Activated CD4-positive, alpha-beta T cell treated with anti-CD3 and anti-CD28 coated beads for 36 hours (primary cell): ENCODE measurements at regions of chr12 and their contacts with region 1.

Region 1: DNA sequence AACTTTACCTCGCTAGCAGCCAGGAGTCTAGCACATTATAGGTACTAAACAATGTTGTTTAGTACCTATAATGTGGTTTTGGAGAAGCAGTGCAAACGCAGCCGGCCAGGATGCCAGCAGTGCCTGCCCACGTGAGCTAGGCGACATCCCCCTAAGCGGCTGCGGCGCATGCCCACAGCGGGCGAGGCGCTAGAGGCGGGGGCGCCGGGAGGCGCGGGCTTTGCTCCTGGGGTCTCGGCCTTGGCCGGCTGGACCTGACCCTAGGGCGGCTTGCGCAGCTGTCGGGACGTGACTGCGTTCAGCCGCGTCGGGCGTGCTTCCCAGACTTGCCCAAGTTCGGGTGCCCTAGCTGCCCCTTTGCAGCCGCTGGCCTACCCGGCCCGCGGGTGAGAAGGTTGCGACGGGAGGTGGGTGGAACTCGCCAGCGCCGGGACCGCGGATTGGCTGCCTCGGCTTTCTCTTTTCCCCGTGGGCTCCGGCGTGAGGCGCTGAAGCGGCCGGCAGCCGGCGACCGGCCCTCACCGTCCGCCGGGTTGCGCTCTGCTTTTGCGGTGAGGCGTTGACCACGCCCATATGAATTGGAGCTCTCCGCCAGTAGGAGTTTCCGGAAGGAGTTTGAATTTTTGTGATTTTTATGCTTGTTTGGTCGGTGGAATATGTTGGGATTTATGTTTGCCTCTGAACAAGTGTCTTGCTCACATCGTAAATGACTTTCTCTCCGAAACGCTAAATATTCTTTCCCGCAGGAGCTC is at the start of gene TMEM19:
- DNase-seq: peak; percentile 87
- ATAC-seq: peak; percentile 88
- H3K4me3 Mint-ChIP-seq: peak within 1 kb of the TSS; percentile 87
- H3K27ac Mint-ChIP-seq: peak within 1 kb of the TSS; percentile 91
- H3K4me1 Mint-ChIP-seq: peaks cover 17% of the 10 kb centered on the region
- H3K27me3 Mint-ChIP-seq: no peaks in the 10 kb centered on the region
- total RNA-seq, gene TMEM19: 6.1 to 12.9 TPM

Region 2: DNA sequence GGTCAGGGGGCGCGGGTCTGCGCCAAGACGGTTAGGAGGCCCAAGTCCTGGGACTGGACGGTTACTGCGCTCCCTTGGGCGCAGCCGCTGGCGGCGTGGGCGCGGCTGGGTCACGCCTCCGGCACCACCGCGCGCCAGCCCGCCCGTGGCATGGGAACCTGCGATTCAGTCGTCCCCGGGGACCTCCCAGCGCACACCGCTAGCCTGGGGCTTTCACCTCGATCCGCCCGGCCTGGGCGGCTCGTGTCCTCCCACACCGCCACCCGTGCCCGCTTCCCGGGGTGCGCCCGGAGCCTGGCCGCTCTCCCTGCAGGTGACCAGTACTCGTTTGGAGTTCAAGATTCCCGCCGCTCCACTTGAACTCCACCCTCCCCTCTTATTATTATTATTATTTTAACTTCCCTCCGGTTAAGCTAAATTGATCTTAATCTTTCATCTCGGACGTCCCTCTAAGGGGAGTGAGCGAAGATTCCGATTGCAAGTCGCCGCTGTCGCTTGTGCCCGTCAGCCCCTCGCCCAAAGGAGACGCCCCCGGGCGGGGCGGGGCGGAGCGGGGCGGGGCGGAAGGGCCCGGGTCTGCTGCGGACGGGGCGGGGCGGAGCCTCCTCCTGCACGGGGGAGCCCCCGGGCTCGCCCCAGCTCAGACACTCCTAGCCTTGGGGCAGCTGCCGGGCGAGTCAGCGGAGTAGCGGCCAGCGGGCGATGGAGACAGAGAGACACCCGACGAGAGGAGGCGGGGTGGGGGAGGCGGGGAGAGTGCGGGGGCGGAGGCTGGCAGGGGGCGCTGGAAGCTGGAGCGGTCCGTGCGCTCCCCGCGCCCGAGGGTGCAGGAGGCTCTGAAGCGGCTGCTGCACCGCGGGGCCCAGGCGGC is 1320.2 kb before region 1 on chr12 and contains the start of gene KCNMB4:
- CTCF ChIA-PET with region 1: no interaction called
- POLR2A ChIA-PET with region 1: no interaction called
- intact Hi-C with region 1: loop called in 1 of 2 experiments (anchors 5 kb)
- DNase-seq: peak; percentile 88
- ATAC-seq: peak; percentile 91
- H3K4me3 Mint-ChIP-seq: peak within 1 kb of the TSS; percentile 86
- H3K27ac Mint-ChIP-seq: peak within 1 kb of the TSS; percentile 34
- H3K4me1 Mint-ChIP-seq: peaks cover 17% of the 10 kb centered on the region
- H3K27me3 Mint-ChIP-seq: peaks cover 6% of the 10 kb centered on the region
- total RNA-seq, gene KCNMB4: 0.94 to 2.1 TPM

Region 3: DNA sequence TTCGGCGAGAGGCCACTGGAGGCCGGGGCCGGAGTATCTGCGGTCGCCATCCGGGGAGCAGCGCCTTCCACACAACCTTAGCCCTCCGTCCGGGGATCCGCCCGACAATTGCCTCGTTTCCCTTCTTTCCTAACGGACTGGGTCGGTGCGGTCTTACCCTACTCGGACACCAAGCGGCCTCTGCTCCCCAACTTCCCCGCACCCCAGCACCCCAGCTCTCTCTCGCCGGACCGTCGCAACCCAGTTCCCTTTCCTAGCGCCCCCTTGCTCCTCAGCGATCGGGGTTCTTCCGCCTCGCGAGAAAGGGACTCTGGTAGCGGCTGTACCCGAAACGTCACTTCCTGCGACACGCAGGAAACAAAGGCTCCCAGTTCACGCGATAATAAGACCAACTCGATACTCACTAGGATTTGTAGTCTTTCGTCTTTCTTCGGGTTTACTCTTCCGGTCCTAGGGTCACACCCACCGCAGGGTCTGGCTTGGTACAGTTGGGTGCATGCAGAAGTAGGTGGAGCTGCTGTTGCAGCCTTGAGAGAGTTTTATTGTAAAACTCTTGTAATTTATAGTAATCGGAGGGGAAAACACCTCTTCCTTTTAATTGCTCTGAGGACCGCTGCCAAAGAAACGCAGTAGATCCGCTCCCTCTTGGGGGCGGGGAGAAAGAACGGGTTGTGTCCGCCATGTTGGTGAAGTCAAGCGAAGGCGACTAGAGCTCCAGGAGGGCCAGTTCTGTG is 22.4 kb before region 1 on chr12 and contains the start of gene ZFC3H1:
- CTCF ChIA-PET with region 1: interaction called, 44 read pairs
- POLR2A ChIA-PET with region 1: interaction called, 55 read pairs
- intact Hi-C with region 1: loop called (anchors 1 kb)
- DNase-seq: peak; percentile 93
- ATAC-seq: peak; percentile 87
- H3K4me3 Mint-ChIP-seq: peak within 1 kb of the TSS; percentile 98
- H3K27ac Mint-ChIP-seq: peak within 1 kb of the TSS; percentile 99
- H3K4me1 Mint-ChIP-seq: peaks cover 38% of the 10 kb centered on the region
- H3K27me3 Mint-ChIP-seq: no peaks in the 10 kb centered on the region
- total RNA-seq, gene ZFC3H1: 57.1 to 71.5 TPM

Region 4: GRCh38 chr12:71746983-71747611 is 61.0 kb after region 1 on chr12:
- CTCF ChIA-PET with region 1: interaction called, 16 read pairs
- POLR2A ChIA-PET with region 1: no interaction called
- intact Hi-C with region 1: no loop called
- DNase-seq: peak; percentile 62
- ATAC-seq: peak; percentile 79
- H3K4me3 Mint-ChIP-seq: no peak overlapping the region
- H3K27ac Mint-ChIP-seq: no peak overlapping the region
- H3K4me1 Mint-ChIP-seq: no peaks in the 10 kb centered on the region
- H3K27me3 Mint-ChIP-seq: peaks cover 10% of the 10 kb centered on the region

Region 5: DNA sequence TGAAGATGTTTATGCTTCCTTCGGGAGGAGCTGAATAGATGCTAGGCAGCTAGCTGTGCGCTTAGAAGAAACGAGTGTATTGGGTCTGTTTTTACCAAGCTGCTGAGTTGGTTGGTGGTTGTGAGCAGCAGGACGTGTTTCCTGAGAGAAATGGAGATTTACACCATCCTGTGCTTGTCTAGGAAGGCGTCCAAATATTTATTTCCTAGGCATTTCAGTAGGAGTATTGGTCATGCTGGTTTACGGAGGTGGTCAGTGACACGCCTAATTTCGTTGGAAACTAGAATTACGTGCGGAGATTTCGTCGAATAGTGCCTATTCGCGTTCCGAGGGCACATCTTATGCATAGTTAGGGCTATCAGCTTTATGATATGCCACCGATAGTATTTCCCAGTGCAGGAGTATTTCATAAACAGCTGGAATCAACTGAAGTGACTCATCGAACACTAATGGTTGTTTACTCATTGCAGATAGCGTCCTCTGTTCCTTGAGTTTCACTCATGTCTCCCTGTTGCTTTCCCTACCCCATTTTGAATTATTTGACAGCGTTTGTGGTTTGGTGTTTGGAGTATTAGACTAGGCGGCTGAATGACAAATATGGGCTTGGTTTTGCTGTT is 154.2 kb after region 1 on chr12:
- CTCF ChIA-PET with region 1: no interaction called
- POLR2A ChIA-PET with region 1: no interaction called
- intact Hi-C with region 1: loop called in 1 of 2 experiments (anchors 1 kb)
- DNase-seq: peak; percentile 16
- ATAC-seq: peak; percentile 28
- H3K4me3 Mint-ChIP-seq: peak overlapping the region; percentile 94
- H3K27ac Mint-ChIP-seq: peak overlapping the region; percentile 95
- H3K4me1 Mint-ChIP-seq: peaks cover 39% of the 10 kb centered on the region
- H3K27me3 Mint-ChIP-seq: no peaks in the 10 kb centered on the region